A673 (cell line): ENCODE measurements at regions of chr1 and their contacts with region 1.

Region 1: DNA sequence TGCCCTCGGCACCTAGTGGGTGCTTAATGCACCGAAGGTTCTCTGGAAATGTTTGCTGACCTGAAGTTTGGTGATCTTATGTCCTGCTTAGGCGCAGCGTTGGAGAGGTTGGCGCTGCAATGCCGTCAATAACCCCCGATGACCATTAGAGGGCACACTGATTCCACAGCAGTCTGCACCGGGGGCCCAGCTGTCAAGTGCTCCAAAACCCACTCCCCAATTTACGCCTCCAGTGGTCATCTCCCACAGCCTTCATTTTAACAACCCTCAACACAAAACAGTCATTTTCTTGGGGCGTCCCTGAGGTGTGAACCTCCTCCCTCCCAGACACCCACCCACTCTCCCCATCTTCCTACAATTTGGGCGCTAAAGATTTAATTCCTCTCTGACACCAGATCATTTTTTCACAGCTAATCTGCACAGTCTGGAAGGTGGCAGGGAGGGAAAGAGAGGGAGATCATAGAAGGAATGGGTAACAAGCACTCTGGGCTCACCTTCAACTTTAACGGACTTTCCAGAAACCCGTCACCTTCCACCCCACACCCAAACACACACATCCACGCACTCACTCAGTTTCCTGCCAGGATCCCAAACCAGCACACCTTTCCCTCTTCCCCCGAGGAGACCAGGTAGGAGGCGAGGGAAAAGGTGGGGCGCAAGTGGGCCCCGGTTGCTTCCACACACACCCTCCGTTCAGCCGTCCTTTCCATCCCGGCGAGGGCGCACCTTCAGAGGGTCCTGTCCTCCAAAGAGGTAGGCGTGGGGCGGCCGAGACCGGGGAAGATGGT is 576 bp upstream of the NPR1 start:
- DNase-seq: peak; percentile 64
- H3K4me3 ChIP-seq: peak overlapping the region; percentile 45
- H3K27ac ChIP-seq: no peak overlapping the region
- H3K4me1 ChIP-seq: peaks cover 26% of the 10 kb centered on the region
- H3K27me3 ChIP-seq: peaks cover 40% of the 10 kb centered on the region
- CTCF ChIP-seq: peak; percentile 96

Region 2: DNA sequence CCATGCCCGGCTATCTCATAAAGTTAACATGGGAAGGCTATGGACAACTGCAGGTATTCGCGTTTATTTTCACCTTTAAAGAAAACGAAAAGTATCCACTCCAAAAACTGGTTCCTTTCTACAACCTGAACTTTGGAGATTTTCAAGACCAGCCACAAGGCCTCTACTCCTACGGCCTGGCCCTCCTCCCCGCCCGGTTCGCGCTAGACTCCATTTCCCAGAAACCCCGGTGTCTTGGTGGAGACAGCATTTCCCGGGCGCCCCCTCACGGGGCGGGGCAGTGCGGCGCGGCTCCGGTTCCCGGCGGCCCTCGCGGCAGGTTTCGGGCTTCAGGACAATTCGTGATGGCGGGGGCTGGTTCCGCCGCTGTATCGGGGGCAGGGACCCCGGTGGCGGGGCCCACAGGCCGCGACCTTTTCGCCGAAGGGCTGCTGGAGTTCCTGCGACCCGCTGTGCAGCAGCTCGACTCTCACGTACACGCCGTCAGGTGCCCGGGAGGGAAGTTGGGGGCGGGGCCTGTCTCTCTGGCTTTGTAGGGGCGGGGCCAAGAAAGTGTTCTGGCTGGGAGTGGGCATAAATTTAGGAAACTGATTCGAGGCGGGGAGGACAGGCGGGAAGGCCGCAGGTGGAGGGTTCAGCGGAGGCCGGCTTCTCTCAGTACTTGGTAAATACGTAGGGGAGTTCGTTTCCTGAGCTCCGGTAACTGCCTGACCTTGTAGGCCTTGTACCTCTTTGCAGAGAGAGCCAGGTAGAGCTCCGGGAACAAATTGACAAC is 19.3 kb before region 1 on chr1 and contains the start of gene SNAPIN:
- CTCF ChIA-PET with region 1: no interaction called
- POLR2A ChIA-PET with region 1: no interaction called
- intact Hi-C with region 1: no loop called
- DNase-seq: peak; percentile 97
- H3K4me3 ChIP-seq: peak within 1 kb of the TSS; percentile 67
- H3K27ac ChIP-seq: peak within 1 kb of the TSS; percentile 79
- H3K4me1 ChIP-seq: peaks cover 13% of the 10 kb centered on the region
- H3K27me3 ChIP-seq: no peaks in the 10 kb centered on the region
- CTCF ChIP-seq: no peak; the same call in 1 of the 2 replicates
- total RNA-seq, gene SNAPIN: 47.4 and 55.9 TPM in 2 replicates

Region 3: GRCh38 chr1:153749408-153750005 is 71.6 kb after region 1 on chr1:
- CTCF ChIA-PET with region 1: no interaction called
- POLR2A ChIA-PET with region 1: no interaction called
- intact Hi-C with region 1: loop called (anchors 2 kb)
- DNase-seq: peak; percentile 85
- H3K4me3 ChIP-seq: no peak overlapping the region
- H3K27ac ChIP-seq: no peak overlapping the region
- H3K4me1 ChIP-seq: no peaks in the 10 kb centered on the region
- H3K27me3 ChIP-seq: no peaks in the 10 kb centered on the region
- CTCF ChIP-seq: peak; percentile 98

Region 4: GRCh38 chr1:153775458-153776327 is 97.8 kb after region 1 on chr1:
- CTCF ChIA-PET with region 1: interaction called, 3 read pairs
- POLR2A ChIA-PET with region 1: no interaction called
- intact Hi-C with region 1: loop called (anchors 1 kb)
- DNase-seq: peak; percentile 83
- H3K4me3 ChIP-seq: peak overlapping the region; percentile 71
- H3K27ac ChIP-seq: no peak overlapping the region
- H3K4me1 ChIP-seq: peaks cover 14% of the 10 kb centered on the region
- H3K27me3 ChIP-seq: no peaks in the 10 kb centered on the region
- CTCF ChIP-seq: no peak